Activated CD4-positive, alpha-beta memory T cell treated with anti-CD3 and anti-CD28 coated beads for 36 hours (primary cell): ENCODE measurements at regions of chr1 and their contacts with region 1.

Region 1: GRCh38 chr1:39196244-39197215 is 8.0 kb upstream of the MACF1 start:
- DNase-seq: peak; percentile 78
- H3K4me3 Mint-ChIP-seq: peak overlapping the region; percentile 58
- H3K27ac Mint-ChIP-seq: peak overlapping the region; percentile 98
- H3K4me1 Mint-ChIP-seq: peaks cover 72% of the 10 kb centered on the region
- H3K27me3 Mint-ChIP-seq: no peaks in the 10 kb centered on the region

Region 2: DNA sequence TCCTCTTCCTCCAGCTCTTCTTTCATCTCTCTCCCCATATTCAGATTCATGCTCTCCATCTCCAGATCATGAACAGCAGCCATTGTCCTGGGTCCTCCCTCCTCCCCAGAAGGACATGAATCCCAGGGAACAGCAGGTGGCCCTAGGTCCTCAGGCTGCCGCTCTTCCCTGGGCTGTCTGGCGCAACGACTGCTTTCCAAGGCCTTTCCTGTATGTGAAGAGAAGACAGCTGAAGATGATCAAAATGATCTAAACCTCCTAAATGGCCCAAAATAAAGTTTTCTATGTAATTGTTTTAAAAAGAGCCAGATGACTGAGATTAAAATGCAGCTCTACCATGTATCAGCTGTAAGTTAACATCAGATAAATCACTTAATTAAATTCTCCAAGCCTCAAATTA is 277.4 kb before region 1 on chr1:
- CTCF ChIA-PET with region 1: no interaction called
- POLR2A ChIA-PET with region 1: no interaction called
- intact Hi-C with region 1: no loop called
- DNase-seq: no peak
- H3K4me3 Mint-ChIP-seq: no peak overlapping the region
- H3K27ac Mint-ChIP-seq: no peak overlapping the region
- H3K4me1 Mint-ChIP-seq: peaks cover 17% of the 10 kb centered on the region
- H3K27me3 Mint-ChIP-seq: no peaks in the 10 kb centered on the region

Region 3: GRCh38 chr1:39098546-39099250 is 97.8 kb before region 1 on chr1:
- CTCF ChIA-PET with region 1: interaction called, 58 read pairs
- POLR2A ChIA-PET with region 1: interaction called, 4 read pairs
- intact Hi-C with region 1: loop called (anchors 1 kb)
- DNase-seq: peak; percentile 76
- H3K4me3 Mint-ChIP-seq: no peak overlapping the region
- H3K27ac Mint-ChIP-seq: peak overlapping the region; percentile 46
- H3K4me1 Mint-ChIP-seq: peaks cover 22% of the 10 kb centered on the region
- H3K27me3 Mint-ChIP-seq: no peaks in the 10 kb centered on the region

Region 4: GRCh38 chr1:39220891-39221870 is 24.7 kb after region 1 on chr1:
- CTCF ChIA-PET with region 1: interaction called, 59 read pairs
- POLR2A ChIA-PET with region 1: interaction called, 17 read pairs
- intact Hi-C with region 1: no loop called
- DNase-seq: no peak
- H3K4me3 Mint-ChIP-seq: no peak overlapping the region
- H3K27ac Mint-ChIP-seq: no peak overlapping the region
- H3K4me1 Mint-ChIP-seq: peaks cover 74% of the 10 kb centered on the region
- H3K27me3 Mint-ChIP-seq: no peaks in the 10 kb centered on the region

Region 5: DNA sequence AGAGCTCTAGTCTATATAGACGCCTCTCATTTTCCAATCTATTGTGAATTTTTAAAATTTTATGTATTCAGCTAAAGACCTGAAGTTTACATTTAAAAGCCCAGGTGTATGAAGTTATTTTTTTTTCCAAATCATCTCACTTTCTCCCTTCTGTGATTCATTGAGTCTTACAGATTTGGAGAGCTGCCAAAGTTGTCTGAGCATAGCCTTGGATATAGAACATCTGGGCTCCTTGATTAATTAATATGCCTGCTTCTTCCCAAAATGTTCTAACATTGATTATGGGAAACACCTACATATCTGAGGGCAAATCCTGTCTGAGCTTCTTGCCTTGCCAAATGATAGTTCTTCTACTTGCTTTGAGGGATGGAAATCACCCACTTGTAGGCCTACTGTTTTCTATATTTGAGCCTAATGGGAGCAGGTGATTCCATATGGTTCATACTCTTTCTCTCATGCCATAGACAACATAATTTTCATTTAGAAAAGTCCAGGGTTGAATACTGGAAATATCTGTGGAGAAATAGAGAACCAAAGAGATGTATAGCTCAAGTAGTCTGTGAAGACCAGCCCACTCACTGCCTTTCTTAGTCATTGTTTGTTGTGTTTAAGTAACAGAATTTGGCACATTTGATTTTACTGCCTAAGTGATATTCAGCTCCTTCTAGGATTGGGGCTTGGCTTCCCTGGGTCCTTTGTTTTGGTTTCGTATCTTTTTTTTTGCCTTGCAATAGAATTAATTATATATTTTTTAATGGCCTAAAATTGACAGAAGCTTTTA is 54.1 kb after region 1 on chr1:
- CTCF ChIA-PET with region 1: interaction called, 320 read pairs
- POLR2A ChIA-PET with region 1: no interaction called
- intact Hi-C with region 1: no loop called
- DNase-seq: no peak
- H3K4me3 Mint-ChIP-seq: no peak overlapping the region
- H3K27ac Mint-ChIP-seq: no peak overlapping the region
- H3K4me1 Mint-ChIP-seq: peaks cover 46% of the 10 kb centered on the region
- H3K27me3 Mint-ChIP-seq: no peaks in the 10 kb centered on the region

Region 6: GRCh38 chr1:39275836-39276507 is 79.4 kb after region 1 on chr1:
- CTCF ChIA-PET with region 1: interaction called, 14 read pairs
- POLR2A ChIA-PET with region 1: no interaction called
- intact Hi-C with region 1: no loop called
- DNase-seq: no peak
- H3K4me3 Mint-ChIP-seq: no peak overlapping the region
- H3K27ac Mint-ChIP-seq: no peak overlapping the region
- H3K4me1 Mint-ChIP-seq: peaks cover 59% of the 10 kb centered on the region
- H3K27me3 Mint-ChIP-seq: no peaks in the 10 kb centered on the region

Region 7: DNA sequence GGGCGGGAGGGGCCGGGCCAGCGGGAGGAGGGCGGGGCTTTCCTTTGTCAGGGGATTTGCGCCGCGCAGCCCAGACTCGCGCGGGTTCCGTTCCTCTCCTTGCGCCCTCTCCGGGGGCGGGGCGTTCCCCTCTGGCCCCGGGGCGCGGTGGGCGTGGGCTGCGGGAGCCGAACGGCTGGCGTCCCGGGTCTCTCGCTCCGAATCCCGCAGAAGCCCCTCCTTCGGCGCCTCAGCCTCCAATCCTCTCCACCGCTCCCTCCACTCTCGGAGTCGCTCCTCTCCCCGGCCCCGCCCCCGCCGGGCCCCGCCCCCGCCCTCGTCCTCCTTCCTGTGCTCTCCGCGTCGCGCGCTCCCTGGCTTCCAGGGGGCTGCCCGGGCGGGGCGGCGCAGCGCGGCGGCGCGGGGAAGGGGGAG is 212.1 kb after region 1 on chr1:
- CTCF ChIA-PET with region 1: interaction called, 27 read pairs
- POLR2A ChIA-PET with region 1: no interaction called
- intact Hi-C with region 1: loop called (anchors 2 kb)
- DNase-seq: peak; percentile 86
- H3K4me3 Mint-ChIP-seq: peak overlapping the region; percentile 82
- H3K27ac Mint-ChIP-seq: no peak overlapping the region
- H3K4me1 Mint-ChIP-seq: peaks cover 68% of the 10 kb centered on the region
- H3K27me3 Mint-ChIP-seq: no peaks in the 10 kb centered on the region